Mammary epithelial cell (primary cell): ENCODE measurements at regions of chr9 and their contacts with region 1.

Region 1: GRCh38 chr9:127074561-127075548 is 47.6 kb downstream of the ANGPTL2 start:
- DNase-seq: no peak
- H3K4me3 ChIP-seq: no peak overlapping the region
- H3K27ac ChIP-seq: no peak overlapping the region
- H3K4me1 ChIP-seq: no peaks in the 10 kb centered on the region
- H3K27me3 ChIP-seq: peaks cover 8% of the 10 kb centered on the region
- CTCF ChIP-seq: no peak

Region 2: GRCh38 chr9:127163409-127163808 is 88.6 kb after region 1 on chr9:
- CTCF ChIA-PET with region 1: no interaction called
- dilution Hi-C with region 1: loop called (anchors 5 kb)
- in situ Hi-C with region 1: no loop called
- intact Hi-C with region 1: no loop called
- DNase-seq: peak; percentile 28
- H3K4me3 ChIP-seq: no peak overlapping the region
- H3K27ac ChIP-seq: no peak overlapping the region
- H3K4me1 ChIP-seq: peaks cover 13% of the 10 kb centered on the region
- H3K27me3 ChIP-seq: peaks cover 2% of the 10 kb centered on the region
- CTCF ChIP-seq: no peak